IMR-90 (cell line): ENCODE measurements at regions of chr7 and their contacts with region 1.

Region 1: DNA sequence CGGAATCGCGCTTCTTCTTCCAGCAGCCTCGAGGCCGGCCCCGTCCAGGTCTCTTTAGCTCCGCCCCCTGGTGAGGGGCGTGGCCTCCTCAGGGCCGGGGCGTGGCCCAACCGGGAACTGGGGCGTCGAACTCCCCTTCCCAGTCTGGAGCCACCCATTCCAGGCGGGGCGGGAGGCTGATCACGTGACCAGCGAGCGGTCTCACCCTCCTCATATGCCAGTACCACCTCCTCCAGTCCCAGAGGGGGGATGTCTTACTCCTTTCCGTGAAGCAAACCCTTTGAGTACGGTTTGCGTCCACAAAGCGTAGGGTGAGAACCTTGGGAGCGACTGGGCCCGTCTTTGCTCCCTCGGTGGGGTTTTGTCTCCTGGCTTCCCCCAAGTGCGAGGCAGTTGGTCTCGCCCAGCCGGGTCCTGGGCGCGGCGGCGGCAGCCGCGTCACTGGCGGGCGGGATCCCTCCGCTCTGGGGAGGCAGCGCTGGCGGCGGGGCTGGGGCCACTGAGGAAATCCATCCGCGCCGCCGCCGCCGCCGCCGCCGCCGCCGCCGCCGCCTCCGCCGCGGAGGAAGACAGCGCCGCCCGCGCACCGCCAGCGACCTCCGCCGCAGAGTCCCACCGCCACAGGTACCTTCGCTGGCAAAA is at the start of gene GNB2:
- DNase-seq: peak; percentile 99
- ATAC-seq: peak; percentile 86
- H3K4me3 ChIP-seq: peak within 1 kb of the TSS; percentile 85
- H3K27ac ChIP-seq: peak within 1 kb of the TSS; percentile 97
- H3K4me1 ChIP-seq: peaks cover 4% of the 10 kb centered on the region; the same call in 1 of the 2 replicates
- H3K27me3 ChIP-seq: no peaks in the 10 kb centered on the region
- CTCF ChIP-seq: no peak
- POLR2A ChIP-seq: peak; percentile 25; the same call in 1 of the 2 replicates
- RAD21 ChIP-seq: no peak
- total RNA-seq, gene GNB2: 62.0 and 67.5 TPM in 2 replicates

Region 2: DNA sequence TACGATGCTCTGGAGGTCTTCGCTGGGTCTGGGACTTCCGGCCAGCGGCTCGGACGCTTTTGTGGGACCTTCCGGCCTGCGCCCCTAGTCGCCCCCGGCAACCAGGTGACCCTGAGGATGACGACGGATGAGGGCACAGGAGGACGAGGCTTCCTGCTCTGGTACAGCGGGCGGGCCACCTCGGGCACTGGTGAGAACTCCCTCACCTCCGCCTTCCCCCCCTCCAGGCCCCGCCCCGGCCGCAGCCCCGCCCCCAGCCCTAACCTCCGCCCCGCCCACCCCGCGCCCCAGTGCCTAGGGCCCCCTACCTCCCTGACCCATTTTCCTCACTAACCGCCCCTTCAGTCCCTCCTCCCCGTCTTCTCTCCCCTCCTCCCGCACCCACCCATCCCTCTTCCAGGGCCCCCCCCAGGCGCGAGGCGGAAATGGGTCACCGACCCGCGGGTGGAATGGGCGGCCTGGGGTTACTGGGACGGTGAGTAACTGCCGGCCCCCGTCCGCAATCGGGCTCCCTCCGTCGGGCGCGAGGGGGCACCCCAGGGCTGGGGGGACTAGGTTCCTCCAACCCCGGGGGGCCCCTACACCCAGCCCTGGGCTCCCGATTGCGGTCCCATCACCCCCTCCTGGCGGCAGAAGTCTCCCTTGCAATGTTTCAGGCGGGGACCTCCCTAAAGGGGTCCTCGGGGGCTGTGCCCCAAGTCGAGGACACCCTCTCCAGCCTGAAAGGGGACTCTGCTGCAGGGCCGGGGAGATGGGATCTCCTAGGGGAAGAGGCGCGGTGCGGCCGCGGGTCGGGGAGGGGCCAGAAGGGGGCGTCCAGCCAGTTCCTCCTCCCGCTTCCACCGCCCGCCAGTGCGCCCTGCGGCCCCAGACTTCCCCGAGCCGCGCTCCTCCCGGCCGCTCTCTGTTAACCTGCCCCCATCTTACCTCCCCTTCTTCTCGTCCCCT is 69.1 kb before region 1 on chr7:
- CTCF ChIA-PET with region 1: no interaction called
- POLR2A ChIA-PET with region 1: no interaction called
- dilution Hi-C with region 1: no loop called
- in situ Hi-C with region 1: no loop called
- intact Hi-C with region 1: loop called (anchors 2 kb)
- DNase-seq: peak; percentile 46
- ATAC-seq: peak; percentile 54
- H3K4me3 ChIP-seq: peak overlapping the region; percentile 69
- H3K27ac ChIP-seq: peak overlapping the region; percentile 99
- H3K4me1 ChIP-seq: peaks cover 9% of the 10 kb centered on the region
- H3K27me3 ChIP-seq: no peaks in the 10 kb centered on the region
- CTCF ChIP-seq: peak; percentile 36
- POLR2A ChIP-seq: no peak
- RAD21 ChIP-seq: peak; percentile 18; the same call in 1 of the 2 replicates

Region 3: DNA sequence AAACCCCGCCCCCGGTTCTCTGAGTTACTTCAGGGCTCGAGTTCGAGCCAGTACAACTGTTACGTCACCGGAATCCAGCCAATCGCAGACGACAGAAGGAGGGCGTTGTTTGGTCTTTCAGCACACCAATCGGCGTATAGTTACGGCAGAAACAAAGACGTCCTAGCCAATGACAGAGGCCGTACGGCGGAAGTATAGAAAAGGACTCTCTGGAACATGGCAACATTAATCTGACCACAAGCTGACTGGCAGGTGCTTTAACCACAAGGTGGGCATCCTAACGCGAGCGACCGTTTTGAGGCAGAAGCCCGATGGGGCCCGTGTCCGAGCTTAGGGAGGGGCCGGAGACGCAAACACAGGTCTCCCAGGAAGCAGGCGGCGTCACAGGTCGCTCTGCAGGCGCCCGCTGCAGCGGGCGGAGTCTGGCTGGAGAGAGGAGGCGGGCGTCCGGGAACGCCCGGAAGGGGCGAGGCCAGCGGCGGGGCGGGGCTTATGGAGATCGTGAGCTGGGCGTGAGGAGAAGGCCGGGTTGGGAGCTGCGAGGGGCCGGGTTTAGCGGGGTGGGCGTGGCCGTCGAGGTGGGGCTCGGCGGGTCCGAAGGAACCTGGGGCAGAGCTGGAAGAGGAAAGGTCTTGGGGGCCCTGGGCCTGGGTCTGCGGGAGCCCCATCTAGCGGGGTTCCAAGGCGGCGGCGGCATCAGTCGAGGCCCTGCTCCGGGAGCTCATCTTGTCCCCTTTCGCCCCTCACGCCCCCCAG is 61.3 kb before region 1 on chr7 and contains the start of gene MOSPD3:
- CTCF ChIA-PET with region 1: interaction called, 3 read pairs
- POLR2A ChIA-PET with region 1: no interaction called
- dilution Hi-C with region 1: no loop called
- in situ Hi-C with region 1: no loop called
- intact Hi-C with region 1: loop called (anchors 2 kb)
- DNase-seq: peak; percentile 99
- ATAC-seq: peak; percentile 98
- H3K4me3 ChIP-seq: peak within 1 kb of the TSS; percentile 68
- H3K27ac ChIP-seq: peak within 1 kb of the TSS; percentile 88
- H3K4me1 ChIP-seq: peaks cover 6% of the 10 kb centered on the region
- H3K27me3 ChIP-seq: no peaks in the 10 kb centered on the region
- CTCF ChIP-seq: no peak
- POLR2A ChIP-seq: peak; percentile 50; the same call in 1 of the 2 replicates
- RAD21 ChIP-seq: no peak
- total RNA-seq, gene MOSPD3: 2.2 and 2.3 TPM in 2 replicates

Region 4: DNA sequence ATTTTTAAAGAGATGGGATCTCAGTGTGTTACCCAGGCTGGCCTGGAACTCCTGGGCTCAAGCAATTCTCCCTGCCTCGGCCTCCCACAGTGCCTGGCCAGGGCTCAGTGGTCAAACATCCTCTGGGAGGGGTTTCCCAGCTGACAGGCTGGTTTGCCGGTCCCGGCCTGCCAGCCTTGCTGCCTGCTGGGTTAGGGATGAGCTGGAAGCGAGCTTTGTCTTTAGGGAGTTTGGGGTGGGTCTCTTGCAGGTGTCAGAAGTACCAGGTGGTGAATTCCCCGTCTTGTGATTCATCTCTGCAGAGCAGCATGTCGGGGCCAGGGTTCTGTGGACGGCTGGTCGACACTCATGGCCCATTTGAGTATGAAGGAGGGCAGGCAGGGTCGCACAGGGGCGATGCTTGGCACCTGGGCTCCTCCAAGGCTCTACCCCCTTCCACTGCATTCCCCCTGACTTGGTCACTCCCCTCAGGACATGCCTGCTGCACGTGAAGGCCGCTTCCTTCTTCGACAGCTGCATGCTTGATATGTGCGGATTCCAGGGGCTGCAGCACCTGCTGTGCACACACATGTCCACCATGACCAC is 90.2 kb after region 1 on chr7:
- CTCF ChIA-PET with region 1: no interaction called
- POLR2A ChIA-PET with region 1: no interaction called
- dilution Hi-C with region 1: no loop called
- in situ Hi-C with region 1: no loop called
- intact Hi-C with region 1: no loop called
- DNase-seq: no peak
- ATAC-seq: no peak
- H3K4me3 ChIP-seq: no peak overlapping the region
- H3K27ac ChIP-seq: no peak overlapping the region
- H3K4me1 ChIP-seq: no peaks in the 10 kb centered on the region
- H3K27me3 ChIP-seq: peaks cover 53% of the 10 kb centered on the region
- CTCF ChIP-seq: no peak
- POLR2A ChIP-seq: no peak
- RAD21 ChIP-seq: no peak